Heart right ventricle (tissue), 16 donors: ENCODE measurements at regions of chr5 and their contacts with region 1.

Region 1: DNA sequence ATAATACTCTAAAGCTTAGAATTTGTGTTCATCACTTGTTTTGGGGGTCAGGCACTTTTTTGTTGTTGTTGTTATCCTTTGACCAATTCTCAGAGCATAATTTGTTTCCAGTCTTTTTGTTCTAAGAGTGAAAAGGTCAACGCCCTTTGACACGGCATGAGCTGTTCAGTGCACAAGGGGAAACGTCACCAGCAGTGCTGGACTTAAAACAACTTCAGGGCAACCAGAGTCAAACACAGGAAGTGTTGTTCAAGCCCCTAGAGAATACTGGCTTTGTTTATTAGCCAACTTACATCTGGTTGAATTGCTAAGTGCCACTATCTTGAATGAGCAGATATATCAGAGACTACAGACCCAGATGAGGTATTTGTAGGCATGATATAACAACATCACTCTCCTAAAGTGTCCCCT is 368.9 kb downstream of the TMEM161B start:
- DNase-seq: peak; percentile 16 to 63
- ATAC-seq: peak; percentile 83 to 97 (median 94)
- H3K4me3 ChIP-seq: no peak overlapping the region
- H3K27ac ChIP-seq: peak overlapping the region in 8 of 10 donors; percentile 2 to 60 (median 28)
- H3K4me1 ChIP-seq: peaks cover 0 to 30% (median 5%) of the 10 kb centered on the region in 9 donors
- H3K27me3 ChIP-seq: no peaks in the 10 kb centered on the region
- CTCF ChIP-seq: no peak

Region 2: GRCh38 chr5:87867281-87867680 is 32.4 kb before region 1 on chr5:
- intact Hi-C with region 1: no loop called
- DNase-seq: no peak
- ATAC-seq: no peak
- H3K4me3 ChIP-seq: no peak overlapping the region
- H3K27ac ChIP-seq: no peak overlapping the region
- H3K4me1 ChIP-seq: no peaks in the 10 kb centered on the region
- H3K27me3 ChIP-seq: no peaks in the 10 kb centered on the region
- CTCF ChIP-seq: no peak

Region 3: GRCh38 chr5:87944553-87945285 is 45.0 kb after region 1 on chr5:
- intact Hi-C with region 1: loop called in 1 of 10 experiments (anchors 2 kb)
- DNase-seq: peak; percentile 37 to 52
- ATAC-seq: peak in 7 of 8 donors; percentile 61 to 89 (median 85)
- H3K4me3 ChIP-seq: no peak overlapping the region
- H3K27ac ChIP-seq: no peak overlapping the region
- H3K4me1 ChIP-seq: peaks cover 0 to 13% (median 0%) of the 10 kb centered on the region in 9 donors
- H3K27me3 ChIP-seq: peaks cover 0 to 5% (median 0%) of the 10 kb centered on the region in 7 donors
- CTCF ChIP-seq: no peak

Region 4: GRCh38 chr5:88680253-88681132 is 780.8 kb after region 1 on chr5:
- intact Hi-C with region 1: loop called in 1 of 10 experiments (anchors 10 kb)
- DNase-seq: peak; percentile 57 to 77
- ATAC-seq: peak; percentile 87 to 95 (median 92)
- H3K4me3 ChIP-seq: peak overlapping the region in 9 of 10 donors; percentile 18 to 52 (median 41)
- H3K27ac ChIP-seq: no peak overlapping the region
- H3K4me1 ChIP-seq: peaks cover 3 to 31% (median 18%) of the 10 kb centered on the region in 9 donors
- H3K27me3 ChIP-seq: peaks cover 50 to 100% (median 99%) of the 10 kb centered on the region in 7 donors
- CTCF ChIP-seq: peak; percentile 86 to 99 (median 96)

Region 5: DNA sequence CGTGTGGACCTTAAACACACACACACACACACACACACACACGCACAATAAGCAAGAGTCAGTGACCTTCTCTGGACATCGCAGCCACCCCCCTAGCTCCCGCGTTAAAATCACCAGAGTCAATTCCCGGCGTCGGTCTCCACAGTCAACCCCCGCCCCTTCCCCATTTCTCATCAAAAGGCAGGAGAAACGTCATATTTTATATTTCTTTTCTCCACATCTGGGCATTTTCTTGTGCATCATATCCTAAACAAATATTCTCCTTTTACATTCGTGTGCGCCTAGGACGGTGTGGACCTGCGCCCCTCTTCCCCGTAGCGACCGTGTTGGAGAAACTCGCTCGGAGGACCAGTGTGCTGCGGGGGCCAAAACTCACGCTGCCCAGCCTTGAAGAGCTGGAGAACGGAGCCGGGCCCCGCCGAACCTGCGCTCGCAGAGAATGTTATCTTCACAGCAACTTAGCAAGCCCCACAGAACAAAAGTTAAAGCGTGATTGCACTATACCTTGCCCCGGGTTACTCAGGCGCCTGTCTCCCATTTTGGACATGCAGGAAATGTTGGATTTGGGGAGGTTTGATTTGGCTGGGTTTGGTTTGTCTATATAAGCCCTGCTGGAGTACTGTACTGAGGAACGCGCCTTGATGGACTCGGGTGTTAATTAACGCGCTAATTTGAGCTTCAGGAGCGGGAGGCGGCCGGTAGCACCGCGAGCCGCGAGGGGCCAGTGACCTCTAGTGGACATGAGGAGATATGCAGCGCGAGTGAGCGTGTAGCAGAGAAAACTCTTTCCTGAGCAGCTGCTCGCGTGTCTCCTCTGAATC is 790.9 kb after region 1 on chr5:
- intact Hi-C with region 1: loop called in 2 of 10 experiments (anchors 10 kb)
- DNase-seq: peak; percentile 63 to 68
- ATAC-seq: peak; percentile 73 to 93 (median 90)
- H3K4me3 ChIP-seq: peak overlapping the region in 8 of 10 donors; percentile 15 to 39 (median 30)
- H3K27ac ChIP-seq: no peak overlapping the region
- H3K4me1 ChIP-seq: peaks cover 0 to 47% (median 35%) of the 10 kb centered on the region in 9 donors
- H3K27me3 ChIP-seq: peaks cover 31 to 100% (median 100%) of the 10 kb centered on the region in 7 donors
- CTCF ChIP-seq: peak; percentile 94 to 98 (median 96)